T-cell (primary cell): ENCODE measurements at regions of chr18 and their contacts with region 1.

Region 1: GRCh38 chr18:59022167-59022945 is 117.3 kb upstream of the SEC11C start:
- DNase-seq: no peak
- ATAC-seq: no peak
- H3K4me3 ChIP-seq: no peak overlapping the region
- H3K4me3 Mint-ChIP-seq: no peak overlapping the region
- H3K27ac ChIP-seq: no peak overlapping the region
- H3K27ac Mint-ChIP-seq: no peak overlapping the region
- H3K4me1 ChIP-seq: no peaks in the 10 kb centered on the region
- H3K4me1 Mint-ChIP-seq: no peaks in the 10 kb centered on the region
- H3K27me3 ChIP-seq: no peaks in the 10 kb centered on the region
- H3K27me3 Mint-ChIP-seq: peaks cover 6 to 22% of the 10 kb centered on the region in 2 donors

Region 2: GRCh38 chr18:58947136-58947732 is 75.1 kb before region 1 on chr18:
- CTCF ChIA-PET with region 1: interaction called in 1 of 2 experiments, 10 read pairs
- POLR2A ChIA-PET with region 1: no interaction called
- DNase-seq: no peak
- ATAC-seq: no peak
- H3K4me3 ChIP-seq: no peak overlapping the region
- H3K4me3 Mint-ChIP-seq: no peak overlapping the region
- H3K27ac ChIP-seq: no peak overlapping the region
- H3K27ac Mint-ChIP-seq: no peak overlapping the region
- H3K4me1 ChIP-seq: no peaks in the 10 kb centered on the region
- H3K4me1 Mint-ChIP-seq: peaks cover 0 to 2% (median 0%) of the 10 kb centered on the region in 3 donors
- H3K27me3 ChIP-seq: peaks cover 0 to 4% of the 10 kb centered on the region in 2 experiments
- H3K27me3 Mint-ChIP-seq: peaks cover 16 to 17% of the 10 kb centered on the region in 2 donors

Region 3: DNA sequence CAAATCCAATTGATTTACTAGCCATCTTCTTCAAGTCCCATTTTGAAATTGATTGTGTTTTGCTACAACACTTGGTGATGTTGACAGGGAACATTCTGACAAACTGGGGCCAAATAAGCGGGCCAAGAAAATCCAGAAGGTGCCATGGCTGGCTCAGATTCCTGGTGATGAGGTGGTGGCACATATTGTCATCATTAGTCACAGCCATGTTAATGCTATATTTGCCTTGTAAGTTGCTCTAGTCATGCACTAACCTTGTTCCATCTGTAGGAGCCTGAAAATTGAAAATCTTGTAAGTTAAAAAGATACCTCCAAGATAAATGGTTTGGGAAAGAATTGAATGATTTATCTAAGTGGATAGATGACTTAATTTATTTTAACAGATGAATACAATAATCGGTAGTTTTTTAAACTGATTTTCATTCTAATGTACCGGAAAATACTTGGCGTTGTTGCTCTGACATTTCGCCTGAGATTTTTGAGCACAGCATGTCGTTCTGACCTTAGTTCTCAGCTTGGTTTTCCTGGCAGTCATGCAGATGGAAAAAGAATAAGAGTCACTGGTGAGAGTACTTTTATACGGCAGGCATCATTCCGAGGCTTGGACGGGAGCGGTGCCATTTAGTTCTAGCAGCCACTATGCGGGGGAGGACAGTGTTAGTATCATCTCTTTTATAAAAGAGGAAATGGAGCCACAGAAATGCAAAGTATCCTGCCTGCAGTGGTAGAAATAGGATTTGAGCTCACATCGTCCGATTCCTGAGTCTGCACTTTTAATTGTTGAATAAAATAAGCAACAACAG is 23.8 kb before region 1 on chr18:
- CTCF ChIA-PET with region 1: interaction called in 1 of 2 experiments, 11 read pairs
- POLR2A ChIA-PET with region 1: no interaction called
- DNase-seq: no peak
- ATAC-seq: no peak
- H3K4me3 ChIP-seq: no peak overlapping the region
- H3K4me3 Mint-ChIP-seq: no peak overlapping the region
- H3K27ac ChIP-seq: no peak overlapping the region
- H3K27ac Mint-ChIP-seq: no peak overlapping the region
- H3K4me1 ChIP-seq: no peaks in the 10 kb centered on the region
- H3K4me1 Mint-ChIP-seq: no peaks in the 10 kb centered on the region
- H3K27me3 ChIP-seq: peaks cover 0 to 3% of the 10 kb centered on the region in 2 experiments
- H3K27me3 Mint-ChIP-seq: peaks cover 9 to 22% of the 10 kb centered on the region in 2 donors

Region 4: DNA sequence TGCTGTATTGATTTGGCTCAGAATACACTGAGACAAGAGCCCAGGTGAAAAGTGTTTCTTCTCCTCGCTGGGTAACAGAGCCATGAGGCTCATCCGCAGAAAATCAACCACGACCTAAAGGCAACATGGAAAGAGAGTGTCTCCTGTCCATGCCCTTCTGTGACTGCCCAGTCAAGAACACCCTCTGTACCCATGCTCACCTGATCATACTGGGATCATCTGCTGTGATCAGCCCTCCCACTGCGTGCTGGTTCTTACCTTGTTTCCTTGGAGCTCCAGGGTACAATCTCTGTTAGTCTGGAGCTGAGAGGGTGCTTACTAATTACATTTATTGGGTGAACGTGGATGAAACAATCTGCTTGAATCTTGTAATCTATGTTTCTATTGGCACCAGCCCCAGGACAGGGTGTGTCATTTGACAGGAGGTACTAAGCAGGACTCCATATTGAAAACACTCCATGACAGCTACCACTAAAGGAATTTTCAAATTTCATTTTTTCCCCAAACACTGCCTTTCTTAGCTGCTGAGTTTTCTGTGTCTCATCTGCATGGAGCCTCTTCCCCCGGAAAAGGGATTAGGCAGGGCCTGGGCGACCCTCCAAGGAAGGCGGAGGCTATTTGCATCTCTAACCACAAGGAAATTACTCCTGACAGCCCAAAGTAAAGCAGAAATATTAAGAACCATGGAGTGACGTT is 157.9 kb after region 1 on chr18:
- CTCF ChIA-PET with region 1: no interaction called
- POLR2A ChIA-PET with region 1: no interaction called
- DNase-seq: no peak
- ATAC-seq: no peak
- H3K4me3 ChIP-seq: no peak overlapping the region
- H3K4me3 Mint-ChIP-seq: no peak overlapping the region
- H3K27ac ChIP-seq: no peak overlapping the region
- H3K27ac Mint-ChIP-seq: no peak overlapping the region
- H3K4me1 ChIP-seq: no peaks in the 10 kb centered on the region
- H3K4me1 Mint-ChIP-seq: no peaks in the 10 kb centered on the region
- H3K27me3 ChIP-seq: peaks cover 0 to 21% of the 10 kb centered on the region in 2 experiments
- H3K27me3 Mint-ChIP-seq: peaks cover 12 to 30% of the 10 kb centered on the region in 2 donors